RWPE1 (cell line): ENCODE measurements at regions of chr11 and their contacts with region 1.

Region 1: DNA sequence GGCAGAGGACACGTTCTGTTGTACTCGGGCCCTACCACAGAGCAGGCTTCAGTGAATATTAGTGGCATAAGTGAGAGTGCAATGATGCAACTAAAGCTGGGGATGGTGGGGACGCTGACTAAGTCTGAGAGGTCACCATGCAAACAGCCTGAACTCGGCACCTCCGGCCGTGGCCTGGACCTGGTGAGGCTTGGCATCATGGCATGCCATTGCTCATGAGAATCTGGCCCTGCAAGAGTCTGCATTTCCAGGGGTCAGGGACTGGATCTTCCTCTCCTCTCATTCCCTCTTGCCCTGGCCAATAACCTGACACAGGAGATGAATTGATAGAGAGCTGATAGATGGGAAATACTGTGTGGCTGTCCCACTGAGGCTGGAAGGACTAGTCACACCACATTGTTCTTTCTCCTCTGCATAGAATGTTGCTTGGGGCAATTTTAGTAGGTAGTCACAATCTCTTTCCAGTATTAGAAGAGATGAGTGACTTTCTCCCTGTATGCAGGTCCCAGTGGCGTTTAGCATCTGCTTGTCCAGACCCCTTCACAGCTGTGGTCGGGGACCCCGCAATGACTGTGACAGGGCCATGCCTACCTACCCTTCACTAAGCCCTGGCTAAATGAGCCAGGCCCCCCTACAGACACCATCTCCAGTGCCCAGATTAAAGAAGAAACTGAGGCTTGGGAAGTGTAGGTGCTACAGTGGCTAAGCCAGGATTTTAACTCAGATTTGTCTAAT is 24.1 kb upstream of the P2RY2 start:
- DNase-seq: no peak
- H3K27ac ChIP-seq: peak overlapping the region; percentile 95
- CTCF ChIP-seq: no peak

Region 2: DNA sequence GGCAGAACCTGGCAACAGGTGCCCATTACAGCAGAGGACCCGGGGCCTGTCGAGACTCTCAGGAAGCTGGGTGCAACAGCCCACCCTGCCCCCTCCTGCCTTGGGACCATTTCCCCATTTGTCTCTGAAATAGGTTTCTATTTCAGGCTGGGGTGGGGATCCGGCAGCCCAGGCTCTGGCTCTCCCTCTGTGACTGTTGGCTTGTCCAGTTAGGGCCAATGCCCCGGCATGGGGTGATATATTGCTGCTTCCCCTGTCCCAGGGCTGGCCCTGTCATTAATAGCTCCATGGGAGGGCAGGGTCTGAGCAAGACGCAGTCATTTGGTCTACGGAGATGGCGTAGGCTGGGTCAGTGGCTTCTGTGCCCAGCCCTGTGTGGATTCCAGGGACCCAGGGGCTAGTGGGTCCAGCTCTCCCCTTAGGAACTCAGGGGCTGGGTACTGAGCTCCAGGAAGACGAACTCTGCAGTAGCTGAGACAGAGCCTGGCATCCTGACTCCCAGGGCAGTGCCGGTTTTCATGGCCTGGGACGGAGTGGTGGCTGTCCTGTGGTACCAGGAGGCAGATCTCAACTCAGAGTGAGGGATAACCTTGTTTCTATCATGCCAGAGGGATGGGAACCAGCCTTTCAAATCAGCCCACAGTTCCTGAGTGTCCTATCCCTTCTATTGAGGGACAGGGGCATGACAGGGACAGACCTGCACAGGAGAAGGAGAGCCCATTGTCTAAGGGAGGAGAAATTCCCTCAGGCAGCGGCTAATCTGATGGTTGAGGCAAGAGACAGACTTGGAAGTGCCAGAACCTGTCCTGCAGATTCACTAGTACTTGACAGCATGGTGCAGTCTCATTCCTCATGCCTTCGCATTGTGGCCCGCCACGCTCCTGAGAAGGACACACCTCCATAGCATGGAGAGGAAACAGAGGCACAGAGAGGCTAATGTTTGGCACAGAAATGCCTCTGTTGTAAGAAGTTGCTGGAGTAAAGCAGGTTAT is 81.1 kb after region 1 on chr11:
- CTCF ChIA-PET with region 1: interaction called, 11 read pairs
- POLR2A ChIA-PET with region 1: no interaction called
- DNase-seq: no peak
- H3K27ac ChIP-seq: no peak overlapping the region
- CTCF ChIP-seq: no peak